ENCODE measurements at regions of chr5 and their contacts with region 1.

Region 1: DNA sequence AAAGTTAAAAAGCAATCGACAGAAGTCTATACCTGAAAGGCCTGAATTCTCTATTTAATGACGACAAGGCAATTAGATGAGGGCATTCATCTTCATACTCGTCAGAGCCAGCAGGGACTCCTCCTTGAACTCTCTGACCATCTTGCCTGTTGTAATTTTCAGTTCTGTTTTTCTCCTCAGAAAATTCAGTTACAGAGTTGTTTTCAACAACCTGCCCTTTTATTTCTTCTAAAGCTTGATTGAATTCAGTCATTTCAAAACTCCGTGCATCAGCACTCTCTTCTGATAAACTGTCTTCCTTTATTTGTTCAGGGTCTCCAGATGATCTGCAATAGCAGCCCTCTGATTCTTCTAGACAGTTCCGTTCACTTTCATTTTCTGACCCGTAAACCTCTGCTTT is 15.6 kb downstream of the RIOK2 start:
- DNase-seq: no peak
- ATAC-seq: no peak
- H3K4me3 ChIP-seq: peak overlapping the region in 1 of 12 donors; percentile 16
- H3K27ac ChIP-seq: peak overlapping the region in 1 of 12 donors; percentile 12
- H3K4me1 ChIP-seq: peaks cover 0 to 14% (median 0%) of the 10 kb centered on the region in 12 donors
- H3K27me3 ChIP-seq: no peaks in the 10 kb centered on the region
- CTCF ChIP-seq: no peak
- POLR2A ChIP-seq: no peak

Region 2: GRCh38 chr5:95530416-95530815 is 1637.0 kb before region 1 on chr5:
- intact Hi-C with region 1: loop called in 1 of 10 experiments (anchors 10 kb)
- DNase-seq: no peak
- ATAC-seq: no peak
- H3K4me3 ChIP-seq: no peak overlapping the region
- H3K27ac ChIP-seq: no peak overlapping the region
- H3K4me1 ChIP-seq: peaks cover 0 to 9% (median 0%) of the 10 kb centered on the region in 12 donors
- H3K27me3 ChIP-seq: no peaks in the 10 kb centered on the region
- CTCF ChIP-seq: no peak
- POLR2A ChIP-seq: no peak

Region 3: DNA sequence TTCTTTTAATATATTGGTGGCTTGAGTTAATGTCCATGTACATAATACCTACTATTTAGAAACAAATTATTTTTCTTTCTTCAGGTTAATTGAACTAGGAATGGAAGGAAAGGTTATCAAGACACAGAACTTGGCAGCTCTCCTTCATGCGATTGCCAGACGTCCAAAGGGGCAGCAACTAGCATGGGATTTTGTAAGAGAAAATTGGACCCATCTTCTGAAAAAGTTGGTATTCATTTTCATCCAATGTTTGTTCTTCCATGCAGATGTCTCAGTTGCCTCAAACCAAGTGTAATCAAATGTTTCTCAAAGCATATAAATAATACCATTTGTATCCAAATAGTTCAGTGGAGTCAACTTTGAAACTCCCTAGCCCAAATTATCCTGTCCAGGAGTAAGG is 254.2 kb before region 1 on chr5:
- intact Hi-C with region 1: loop called in 1 of 10 experiments (anchors 5 kb)
- DNase-seq: no peak
- ATAC-seq: no peak
- H3K4me3 ChIP-seq: no peak overlapping the region
- H3K27ac ChIP-seq: no peak overlapping the region
- H3K4me1 ChIP-seq: no peaks in the 10 kb centered on the region
- H3K27me3 ChIP-seq: no peaks in the 10 kb centered on the region
- CTCF ChIP-seq: no peak
- POLR2A ChIP-seq: no peak